MCF 10A (cell line): ENCODE measurements at regions of chr13 and their contacts with region 1.

Region 1: DNA sequence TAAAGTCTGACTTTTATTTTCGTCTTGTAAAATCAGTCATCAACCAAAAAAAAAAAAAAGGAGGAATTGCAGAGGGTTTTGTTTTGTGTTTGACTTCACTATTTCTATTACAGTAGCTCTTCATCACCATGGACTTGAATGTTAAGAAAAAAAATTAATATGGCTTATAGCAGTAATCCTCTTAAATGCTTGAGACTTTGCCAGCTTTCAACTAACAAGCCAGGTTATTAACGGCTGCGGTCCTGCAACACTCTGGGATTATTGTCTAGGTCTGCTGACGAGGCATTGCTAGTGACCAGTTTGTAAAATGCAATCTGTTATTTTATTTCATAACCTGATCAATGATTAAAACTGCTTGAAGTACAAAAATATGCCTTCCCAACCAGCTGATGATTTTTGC is 647.2 kb upstream of the KLHL1 start:
- DNase-seq: no peak
- H3K4me3 Mint-ChIP-seq: no peak overlapping the region
- H3K27ac Mint-ChIP-seq: no peak overlapping the region
- H3K4me1 Mint-ChIP-seq: no peaks in the 10 kb centered on the region
- H3K27me3 Mint-ChIP-seq: peaks cover 70% of the 10 kb centered on the region
- CTCF ChIP-seq: no peak

Region 2: DNA sequence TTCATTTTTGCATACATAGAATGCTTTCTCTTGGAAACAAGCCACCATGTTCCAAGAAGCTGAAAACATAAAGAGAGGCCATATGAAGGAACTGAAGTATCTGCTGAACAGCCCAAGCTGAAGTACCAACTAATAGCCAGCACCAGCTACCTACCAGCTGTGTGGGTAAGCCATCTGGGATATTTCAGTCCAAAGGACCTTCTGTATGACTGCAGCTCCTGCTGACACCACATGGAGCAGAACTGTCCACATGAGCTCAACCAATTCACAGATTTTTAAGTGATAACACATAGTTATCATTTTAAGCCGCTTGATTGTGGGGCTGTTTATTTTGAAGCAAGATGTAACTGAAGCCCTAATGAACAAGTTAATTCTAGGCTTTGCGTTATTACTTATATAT is 26.1 kb before region 1 on chr13:
- CTCF ChIA-PET with region 1: no interaction called
- POLR2A ChIA-PET with region 1: no interaction called
- intact Hi-C with region 1: loop called (anchors 5 kb)
- DNase-seq: no peak
- H3K4me3 Mint-ChIP-seq: no peak overlapping the region
- H3K27ac Mint-ChIP-seq: no peak overlapping the region
- H3K4me1 Mint-ChIP-seq: no peaks in the 10 kb centered on the region
- H3K27me3 Mint-ChIP-seq: peaks cover 46% of the 10 kb centered on the region
- CTCF ChIP-seq: no peak

Region 3: DNA sequence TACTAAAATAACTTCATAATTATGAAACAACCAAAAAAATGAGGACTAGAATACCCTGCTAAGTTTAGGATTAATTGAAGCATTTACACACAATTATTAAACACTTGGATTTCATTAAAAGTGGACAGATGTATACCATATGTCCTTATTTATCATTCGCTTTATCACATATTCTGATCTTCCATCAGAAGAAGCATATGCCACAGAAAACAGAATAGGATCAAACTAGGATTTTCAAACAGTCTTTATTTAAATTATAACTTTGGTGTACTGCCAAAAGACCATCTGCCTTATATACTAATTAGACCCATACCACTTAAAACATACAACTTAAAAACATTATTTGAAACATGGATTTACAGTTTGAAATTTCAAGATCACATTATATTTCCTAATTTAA is 79.9 kb after region 1 on chr13:
- CTCF ChIA-PET with region 1: no interaction called
- POLR2A ChIA-PET with region 1: no interaction called
- intact Hi-C with region 1: no loop called
- DNase-seq: no peak
- H3K4me3 Mint-ChIP-seq: no peak overlapping the region
- H3K27ac Mint-ChIP-seq: no peak overlapping the region
- H3K4me1 Mint-ChIP-seq: no peaks in the 10 kb centered on the region
- H3K27me3 Mint-ChIP-seq: peaks cover 44% of the 10 kb centered on the region
- CTCF ChIP-seq: no peak